ENCODE measurements at regions of chr11 and their contacts with region 1.

Region 1: GRCh38 chr11:67436459-67437081 is 912 bp downstream of the PTPRCAP start:
- DNase-seq: peak; percentile 90
- H3K4me3 Mint-ChIP-seq: peak overlapping the region; percentile 99
- H3K27ac Mint-ChIP-seq: peak overlapping the region; percentile 82
- H3K4me1 Mint-ChIP-seq: peaks cover 44% of the 10 kb centered on the region
- H3K27me3 Mint-ChIP-seq: no peaks in the 10 kb centered on the region

Region 2: GRCh38 chr11:67409261-67409666 is 27.3 kb before region 1 on chr11:
- intact Hi-C with region 1: loop called (anchors 2 kb)
- DNase-seq: peak; percentile 94
- H3K4me3 Mint-ChIP-seq: peak overlapping the region; percentile 90
- H3K27ac Mint-ChIP-seq: peak overlapping the region; percentile 94
- H3K4me1 Mint-ChIP-seq: peaks cover 67% of the 10 kb centered on the region
- H3K27me3 Mint-ChIP-seq: peaks cover 4% of the 10 kb centered on the region

Region 3: DNA sequence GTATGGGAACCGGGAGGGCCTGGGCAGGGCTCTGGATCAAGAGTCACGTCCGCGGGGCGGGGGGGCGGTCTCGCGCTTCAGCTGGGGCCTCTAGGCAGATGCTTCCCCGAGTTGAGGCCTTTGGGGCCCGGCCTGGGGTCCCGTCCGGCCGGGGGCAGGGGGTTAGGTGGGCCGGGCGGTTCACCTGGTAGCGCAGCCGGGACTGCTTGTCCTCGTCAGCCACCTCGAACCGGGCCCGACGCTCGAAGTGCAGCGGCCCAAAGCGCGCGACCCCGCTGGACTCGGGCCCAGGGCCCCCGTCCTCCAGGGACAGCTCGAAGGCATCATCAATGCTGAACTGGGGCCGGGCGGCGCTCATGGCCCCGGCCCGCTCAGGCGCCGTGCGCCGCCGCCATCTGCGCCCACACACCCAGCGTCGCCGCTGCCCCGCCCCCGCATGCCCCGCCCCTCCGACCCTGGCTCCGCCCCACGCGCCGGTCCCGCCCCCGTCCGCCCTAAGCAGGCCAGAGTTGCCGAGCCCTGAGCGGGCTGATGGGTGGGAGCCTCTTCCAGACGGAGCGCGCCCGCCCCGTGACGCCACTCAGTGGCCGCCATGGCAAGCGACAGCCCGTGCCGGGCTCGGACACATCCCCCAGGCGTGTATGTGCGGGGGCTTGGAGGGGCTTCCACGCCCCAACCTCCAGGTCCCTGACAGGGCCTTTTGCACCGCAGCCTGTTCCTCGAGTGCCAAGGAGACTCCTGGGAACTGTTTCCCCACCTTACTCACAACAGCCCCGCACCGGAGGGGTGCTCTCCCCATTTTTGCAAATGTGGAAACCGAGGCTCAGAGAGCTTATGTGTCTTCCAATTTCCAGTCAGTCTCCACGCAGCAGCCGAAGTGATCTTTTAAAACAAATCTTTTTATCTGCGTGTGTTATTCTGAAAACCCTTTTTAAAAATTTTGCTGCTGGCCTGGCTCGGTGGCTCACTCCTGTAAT is 32.6 kb after region 1 on chr11 and contains the start of gene TMEM134:
- intact Hi-C with region 1: loop called (anchors 1 kb)
- DNase-seq: peak; percentile 96
- H3K4me3 Mint-ChIP-seq: peak within 1 kb of the TSS; percentile 96
- H3K27ac Mint-ChIP-seq: peak within 1 kb of the TSS; percentile 84
- H3K4me1 Mint-ChIP-seq: peaks cover 25% of the 10 kb centered on the region
- H3K27me3 Mint-ChIP-seq: no peaks in the 10 kb centered on the region
- total RNA-seq, gene TMEM134: 56.8 and 58.3 TPM in 2 replicates

Region 4: GRCh38 chr11:67482825-67483798 is 46.5 kb after region 1 on chr11 and contains the start of gene AIP:
- intact Hi-C with region 1: loop called (anchors 2 kb)
- DNase-seq: peak; percentile 99
- H3K4me3 Mint-ChIP-seq: peak within 1 kb of the TSS; percentile 96
- H3K27ac Mint-ChIP-seq: peak within 1 kb of the TSS; percentile 99
- H3K4me1 Mint-ChIP-seq: peaks cover 47% of the 10 kb centered on the region
- H3K27me3 Mint-ChIP-seq: peaks cover 5% of the 10 kb centered on the region
- total RNA-seq, gene AIP: 186 and 189 TPM in 2 replicates

Region 5: DNA sequence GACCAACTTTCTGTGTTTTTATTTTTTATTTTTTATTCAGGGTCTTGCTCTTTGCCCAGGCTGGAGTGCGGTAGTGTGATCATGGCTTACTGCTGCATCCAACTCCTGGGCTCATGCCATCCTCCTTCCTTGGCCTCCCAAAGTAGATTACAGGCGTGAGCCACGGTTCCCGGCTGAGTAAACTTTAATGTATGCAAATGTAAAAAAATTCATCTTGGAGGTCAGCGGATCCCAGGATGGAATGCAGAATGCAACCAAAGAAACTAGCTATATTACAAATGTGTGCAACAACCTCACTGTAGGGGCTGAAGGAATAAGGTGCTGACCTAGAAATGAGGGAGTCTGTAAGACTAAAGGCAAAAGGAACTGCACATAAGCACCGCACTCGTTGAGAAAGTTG is 77.5 kb after region 1 on chr11:
- intact Hi-C with region 1: no loop called
- DNase-seq: no peak
- H3K4me3 Mint-ChIP-seq: no peak overlapping the region
- H3K27ac Mint-ChIP-seq: no peak overlapping the region
- H3K4me1 Mint-ChIP-seq: peaks cover 5% of the 10 kb centered on the region
- H3K27me3 Mint-ChIP-seq: peaks cover 25% of the 10 kb centered on the region

Measured in activated CD4-positive, alpha-beta T cell treated with anti-CD3 and anti-CD28 coated beads, Interleukin-2, amount 10 ng/mL, durations not matched to agents 24 days and 14 days (primary cell).